ENCODE measurements at regions of chr17 and their contacts with region 1.

Region 1: GRCh38 chr17:68435876-68436842 is 21.1 kb downstream of the WIPI1 start:
- DNase-seq: peak; percentile 82
- ATAC-seq: peak; percentile 83
- H3K4me3 Mint-ChIP-seq: no peak overlapping the region
- H3K27ac Mint-ChIP-seq: peak overlapping the region; percentile 87
- H3K4me1 Mint-ChIP-seq: peaks cover 26% of the 10 kb centered on the region
- H3K27me3 Mint-ChIP-seq: no peaks in the 10 kb centered on the region
- CTCF ChIP-seq: peak; percentile 96

Region 2: DNA sequence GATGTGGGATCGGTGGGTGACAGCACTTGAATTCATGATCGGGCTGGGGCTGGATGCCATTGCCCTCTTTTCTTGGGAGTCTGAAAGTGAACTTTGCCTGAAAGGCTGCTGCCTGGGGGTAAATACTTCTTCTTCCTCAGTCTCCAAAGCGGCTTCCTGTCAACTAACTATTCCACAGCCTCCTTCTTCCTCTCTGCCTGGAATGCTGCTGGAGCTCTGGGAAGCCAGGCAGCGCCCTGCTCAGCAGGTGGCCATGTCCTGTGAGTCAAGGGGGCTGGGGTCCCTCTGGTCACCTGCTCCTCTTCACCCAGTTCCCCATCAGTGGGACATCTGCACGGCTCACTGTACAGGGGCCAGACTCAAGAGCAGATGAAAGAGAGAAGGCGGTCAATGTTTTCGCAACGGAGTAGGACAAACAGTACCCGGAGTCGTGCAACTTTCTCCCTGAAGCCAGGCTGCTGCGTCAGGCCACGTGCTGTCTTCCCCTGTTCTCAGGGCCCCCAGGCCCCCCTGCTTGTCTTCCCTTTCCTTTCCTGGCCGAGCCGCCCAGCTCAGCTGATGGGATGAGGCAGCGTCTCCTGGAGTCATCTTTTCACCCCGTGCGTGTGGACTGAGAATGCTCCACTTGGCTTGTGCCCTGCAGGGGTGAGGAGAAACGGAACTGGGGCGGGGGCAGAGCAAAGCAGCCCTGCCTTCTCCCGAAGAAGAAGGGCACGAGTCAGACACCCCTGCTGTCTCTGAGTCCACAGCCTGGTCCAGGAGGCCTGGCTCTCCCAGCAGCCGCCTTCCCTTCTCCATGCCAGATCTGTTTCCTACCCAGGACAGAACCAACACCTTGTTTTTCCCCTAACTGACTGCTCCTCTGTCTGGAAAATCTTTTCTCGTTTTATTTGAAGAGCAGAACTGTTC is 58.0 kb before region 1 on chr17:
- CTCF ChIA-PET with region 1: no interaction called
- POLR2A ChIA-PET with region 1: no interaction called
- DNase-seq: peak; percentile 40
- ATAC-seq: peak; percentile 74
- H3K4me3 Mint-ChIP-seq: peak overlapping the region; percentile 30
- H3K27ac Mint-ChIP-seq: peak overlapping the region; percentile 94
- H3K4me1 Mint-ChIP-seq: peaks cover 29% of the 10 kb centered on the region
- H3K27me3 Mint-ChIP-seq: no peaks in the 10 kb centered on the region
- CTCF ChIP-seq: no peak

Region 3: DNA sequence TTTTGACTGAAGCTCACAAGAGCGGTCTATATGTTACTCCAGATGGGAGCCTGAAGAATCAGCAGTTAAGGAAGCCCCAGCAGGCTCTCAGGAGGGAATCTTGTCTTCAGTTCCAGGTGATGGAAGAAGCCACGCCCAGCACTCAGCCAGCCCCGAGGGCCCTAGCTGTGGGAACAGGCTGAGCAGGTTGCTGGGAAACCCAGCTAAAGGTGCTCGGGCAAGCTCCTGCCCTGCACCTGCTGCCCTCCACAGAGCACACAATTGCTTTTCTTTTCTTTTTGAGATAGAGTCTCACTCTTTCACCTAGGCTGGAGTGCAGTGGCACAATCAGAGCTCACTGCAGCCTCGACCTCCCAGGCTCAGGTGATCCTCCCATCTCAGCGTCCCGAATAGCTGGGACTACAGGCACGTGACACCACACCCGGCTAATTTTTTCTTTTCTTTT is 11.2 kb before region 1 on chr17:
- CTCF ChIA-PET with region 1: interaction called, 14 read pairs
- POLR2A ChIA-PET with region 1: no interaction called
- DNase-seq: peak; percentile 57
- ATAC-seq: peak; percentile 83
- H3K4me3 Mint-ChIP-seq: no peak overlapping the region
- H3K27ac Mint-ChIP-seq: no peak overlapping the region
- H3K4me1 Mint-ChIP-seq: peaks cover 29% of the 10 kb centered on the region
- H3K27me3 Mint-ChIP-seq: no peaks in the 10 kb centered on the region; the same call in 1 of the 2 replicates
- CTCF ChIP-seq: no peak

Region 4: DNA sequence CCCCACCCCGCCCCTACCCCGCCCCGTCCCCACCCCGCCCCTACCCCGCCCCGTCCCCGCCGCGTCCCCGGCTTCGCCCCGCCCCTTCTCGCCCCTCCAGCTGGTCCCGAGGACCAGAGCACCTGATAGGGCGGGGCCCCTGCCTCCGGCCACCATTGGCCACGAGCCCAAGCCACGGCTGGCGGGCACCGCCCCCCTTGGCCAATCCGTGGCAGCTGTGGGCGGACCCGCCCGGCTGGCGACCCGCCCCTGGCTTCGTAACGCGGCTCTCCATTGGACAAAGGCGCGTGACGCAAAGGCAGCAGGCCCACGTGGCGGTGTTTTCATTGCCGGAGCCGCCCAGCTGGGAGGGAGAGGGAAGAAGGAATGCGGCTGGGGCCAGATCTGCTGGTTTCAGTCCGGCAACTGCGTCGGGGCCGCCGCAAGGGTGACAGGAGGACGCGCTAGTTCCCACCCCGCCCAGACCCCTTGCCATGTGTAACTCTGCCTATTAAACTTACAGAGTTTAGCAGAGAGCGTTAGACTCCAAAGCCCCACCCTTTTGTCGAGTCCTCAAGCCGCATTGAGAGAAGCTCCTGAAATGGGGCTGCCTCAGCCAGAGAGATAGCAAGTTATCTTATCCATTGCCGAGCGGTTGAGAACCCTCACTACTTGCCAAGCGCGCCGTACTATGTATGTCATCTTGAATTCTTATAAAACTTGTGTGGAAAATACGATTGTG is 21.5 kb after region 1 on chr17:
- CTCF ChIA-PET with region 1: interaction called, 33 read pairs
- POLR2A ChIA-PET with region 1: interaction called, 3 read pairs
- DNase-seq: peak; percentile 99
- ATAC-seq: peak; percentile 91
- H3K4me3 Mint-ChIP-seq: peak overlapping the region; percentile 78
- H3K27ac Mint-ChIP-seq: peak overlapping the region; percentile 87
- H3K4me1 Mint-ChIP-seq: peaks cover 66% of the 10 kb centered on the region
- H3K27me3 Mint-ChIP-seq: peaks cover 7% of the 10 kb centered on the region; the same call in 1 of the 2 replicates
- CTCF ChIP-seq: no peak

Measured in WTC11 (cell line).